GM18951 (cell line): ENCODE measurements at regions of chr2 and their contacts with region 1.

Region 1: DNA sequence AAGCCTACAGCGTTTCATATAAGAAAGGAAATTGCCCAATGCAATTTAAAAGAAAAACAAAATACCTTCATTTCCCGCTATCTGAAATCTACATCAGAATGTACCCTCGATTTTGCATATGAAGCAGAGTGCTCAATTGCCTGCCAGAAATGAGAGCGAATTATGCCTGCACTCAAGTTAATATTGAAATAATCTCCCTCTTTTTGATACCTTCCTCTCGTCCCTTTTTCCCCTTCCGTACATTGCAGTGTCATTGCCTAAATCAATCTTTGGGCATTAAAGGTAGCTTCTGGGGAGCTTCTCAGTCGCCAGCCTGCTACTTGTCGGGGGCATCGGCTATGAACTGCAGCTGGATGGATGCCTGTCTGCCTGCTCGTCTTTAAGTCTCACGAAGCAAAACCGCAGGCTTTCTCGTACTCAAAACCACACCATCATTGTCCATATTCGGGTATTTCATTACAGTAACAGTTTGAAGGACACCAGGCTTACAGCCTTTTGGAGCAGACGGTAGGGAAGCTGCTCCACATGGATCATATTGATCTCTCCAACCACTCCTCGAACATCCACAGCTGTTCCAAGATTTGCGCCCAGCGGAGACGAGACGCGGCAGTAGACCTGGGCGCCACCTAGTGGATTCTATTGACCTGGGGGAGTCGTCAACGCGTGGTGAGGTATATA is 64.0 kb upstream of the HNRNPA3 start:
- POLR2A ChIP-seq: no peak

Region 2: GRCh38 chr2:176126929-176127773 is 1021.5 kb before region 1 on chr2:
- in situ Hi-C with region 1: loop called (anchors 10 kb)
- POLR2A ChIP-seq: no peak

Region 3: DNA sequence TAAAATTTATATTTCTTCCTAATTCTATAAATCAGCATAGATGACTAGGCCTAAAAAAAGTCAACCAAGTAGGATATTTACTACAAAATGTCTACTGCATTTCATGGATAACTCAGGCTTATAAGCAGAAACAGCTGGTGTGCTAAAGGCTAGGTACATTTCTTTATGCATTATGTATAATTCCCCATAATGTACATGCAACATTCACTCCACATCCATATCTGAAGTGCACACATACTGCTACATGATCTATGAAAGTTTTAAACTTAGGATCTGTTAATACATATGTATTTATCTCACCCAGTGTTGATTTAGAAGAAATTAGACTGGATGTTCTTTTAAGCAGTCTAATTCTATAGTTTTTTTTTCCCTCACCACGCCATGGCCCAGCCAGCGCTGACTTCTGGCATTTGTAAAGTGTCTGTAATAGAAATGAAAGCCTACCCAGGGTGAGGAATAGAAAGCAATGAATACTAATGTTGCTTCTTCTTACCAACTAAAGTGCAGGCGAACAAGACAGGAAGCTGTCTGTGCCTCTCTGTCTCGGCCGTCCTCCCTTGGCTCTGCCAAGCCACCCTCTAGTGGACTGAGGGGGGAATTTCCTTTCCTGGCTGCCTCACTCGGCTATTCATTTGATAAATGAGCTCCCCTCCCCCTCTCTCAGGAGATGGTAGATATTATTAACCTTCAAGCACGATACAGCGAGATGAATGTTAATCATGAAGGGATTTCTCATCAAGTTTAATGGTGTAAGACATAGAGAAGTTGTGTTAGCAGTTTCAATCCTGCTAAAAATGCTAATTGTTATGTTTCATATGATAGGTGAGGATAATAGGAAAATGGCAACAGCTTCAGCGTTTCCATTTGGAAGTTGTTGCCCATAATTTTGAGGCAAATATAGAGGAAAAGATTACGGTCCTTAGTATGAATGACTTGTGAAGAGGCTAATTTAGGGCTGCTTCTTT is 494.9 kb before region 1 on chr2:
- in situ Hi-C with region 1: loop called (anchors 25 kb)
- POLR2A ChIP-seq: no peak

Region 4: DNA sequence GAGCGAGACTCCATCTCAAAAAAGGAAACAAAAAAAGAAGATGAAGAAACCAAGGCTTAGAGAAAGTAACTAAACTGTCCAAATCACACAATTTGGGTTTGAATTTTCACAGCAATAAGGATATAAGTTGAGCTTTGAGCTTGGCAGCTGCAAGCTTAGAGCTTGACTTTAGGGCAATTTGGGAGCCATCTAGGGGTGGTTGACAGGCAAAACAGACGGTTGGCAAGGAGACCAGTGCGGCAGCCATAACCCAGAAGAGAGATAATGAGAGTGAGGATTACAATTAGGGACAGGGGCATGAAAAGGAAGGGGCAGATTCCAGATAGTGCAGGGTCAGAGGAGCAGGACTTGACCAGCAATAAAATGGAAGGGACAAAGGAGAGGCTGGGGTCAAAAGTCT is 318.3 kb before region 1 on chr2:
- in situ Hi-C with region 1: loop called (anchors 25 kb)
- POLR2A ChIP-seq: no peak